CD8-positive, alpha-beta memory T cell (primary cell): ENCODE measurements at regions of chr9 and their contacts with region 1.

Region 1: GRCh38 chr9:71768388-71769174 is at the start of gene CEMIP2:
- DNase-seq: peak; percentile 84 to 91 (median 87)
- H3K4me3 ChIP-seq: peak within 1 kb of the TSS; percentile 98
- H3K4me3 Mint-ChIP-seq: peak within 1 kb of the TSS; percentile 91 to 100 (median 97)
- H3K27ac ChIP-seq: peak within 1 kb of the TSS; percentile 84
- H3K27ac Mint-ChIP-seq: peak within 1 kb of the TSS; percentile 94 to 99 (median 98)
- H3K4me1 ChIP-seq: peaks cover 37% of the 10 kb centered on the region
- H3K4me1 Mint-ChIP-seq: peaks cover 42 to 45% (median 45%) of the 10 kb centered on the region in 3 donors
- H3K27me3 ChIP-seq: no peaks in the 10 kb centered on the region
- H3K27me3 Mint-ChIP-seq: peaks cover 0 to 1% of the 10 kb centered on the region in 2 donors
- total RNA-seq, gene CEMIP2: 74.1 to 75.5 TPM

Region 2: DNA sequence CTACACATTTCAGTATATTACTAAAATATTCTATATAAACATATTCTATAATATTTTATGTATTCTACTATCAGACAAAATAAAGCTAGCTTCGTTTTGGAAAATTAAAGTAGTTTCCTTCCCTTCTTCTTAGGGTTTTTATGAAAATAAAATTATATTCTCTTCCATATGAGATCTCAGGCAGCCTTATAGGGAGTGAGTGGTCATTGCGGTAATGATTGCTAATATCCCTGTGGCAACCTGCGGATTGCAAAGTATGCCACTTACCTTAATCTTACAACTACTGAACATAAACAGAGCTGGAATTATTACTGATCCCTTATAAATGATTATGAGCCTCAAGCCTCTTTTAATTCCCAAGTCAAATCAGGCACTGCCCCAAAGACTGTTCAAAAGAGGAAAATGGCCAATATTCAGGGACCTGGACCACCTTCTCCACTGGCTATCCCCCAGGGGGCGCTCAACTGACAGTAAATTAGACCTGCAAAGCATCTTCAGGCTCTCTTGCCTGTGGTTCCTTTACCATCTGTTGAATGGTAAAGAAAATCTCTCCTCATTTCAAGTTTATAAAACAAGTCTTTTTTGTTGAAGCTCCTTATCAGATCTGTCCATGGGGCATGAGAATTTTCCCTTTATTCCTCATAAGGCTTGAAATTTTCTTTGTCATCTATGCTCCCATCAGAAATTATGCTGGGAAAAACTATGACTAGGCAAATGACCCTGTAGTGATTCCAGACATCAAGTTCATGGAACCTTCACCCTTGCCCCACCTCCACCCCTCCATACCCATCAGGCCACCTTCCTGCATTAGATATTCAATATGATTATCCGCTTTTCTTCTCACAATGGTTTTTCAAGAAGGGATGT is 164.2 kb before region 1 on chr9:
- CTCF ChIA-PET with region 1: interaction called, 21 read pairs
- POLR2A ChIA-PET with region 1: interaction called, 3 read pairs
- DNase-seq: peak; percentile 64 to 84 (median 69)
- H3K4me3 ChIP-seq: no peak overlapping the region
- H3K4me3 Mint-ChIP-seq: no peak overlapping the region
- H3K27ac ChIP-seq: no peak overlapping the region
- H3K27ac Mint-ChIP-seq: no peak overlapping the region
- H3K4me1 ChIP-seq: no peaks in the 10 kb centered on the region
- H3K4me1 Mint-ChIP-seq: no peaks in the 10 kb centered on the region
- H3K27me3 ChIP-seq: no peaks in the 10 kb centered on the region
- H3K27me3 Mint-ChIP-seq: no peaks in the 10 kb centered on the region

Region 3: GRCh38 chr9:71655151-71655550 is 113.4 kb before region 1 on chr9:
- CTCF ChIA-PET with region 1: no interaction called
- POLR2A ChIA-PET with region 1: no interaction called
- DNase-seq: no peak
- H3K4me3 ChIP-seq: no peak overlapping the region
- H3K4me3 Mint-ChIP-seq: no peak overlapping the region
- H3K27ac ChIP-seq: no peak overlapping the region
- H3K27ac Mint-ChIP-seq: no peak overlapping the region
- H3K4me1 ChIP-seq: no peaks in the 10 kb centered on the region
- H3K4me1 Mint-ChIP-seq: peaks cover 6 to 9% (median 8%) of the 10 kb centered on the region in 3 donors
- H3K27me3 ChIP-seq: no peaks in the 10 kb centered on the region
- H3K27me3 Mint-ChIP-seq: peaks cover 7 to 12% of the 10 kb centered on the region in 2 donors

Region 4: DNA sequence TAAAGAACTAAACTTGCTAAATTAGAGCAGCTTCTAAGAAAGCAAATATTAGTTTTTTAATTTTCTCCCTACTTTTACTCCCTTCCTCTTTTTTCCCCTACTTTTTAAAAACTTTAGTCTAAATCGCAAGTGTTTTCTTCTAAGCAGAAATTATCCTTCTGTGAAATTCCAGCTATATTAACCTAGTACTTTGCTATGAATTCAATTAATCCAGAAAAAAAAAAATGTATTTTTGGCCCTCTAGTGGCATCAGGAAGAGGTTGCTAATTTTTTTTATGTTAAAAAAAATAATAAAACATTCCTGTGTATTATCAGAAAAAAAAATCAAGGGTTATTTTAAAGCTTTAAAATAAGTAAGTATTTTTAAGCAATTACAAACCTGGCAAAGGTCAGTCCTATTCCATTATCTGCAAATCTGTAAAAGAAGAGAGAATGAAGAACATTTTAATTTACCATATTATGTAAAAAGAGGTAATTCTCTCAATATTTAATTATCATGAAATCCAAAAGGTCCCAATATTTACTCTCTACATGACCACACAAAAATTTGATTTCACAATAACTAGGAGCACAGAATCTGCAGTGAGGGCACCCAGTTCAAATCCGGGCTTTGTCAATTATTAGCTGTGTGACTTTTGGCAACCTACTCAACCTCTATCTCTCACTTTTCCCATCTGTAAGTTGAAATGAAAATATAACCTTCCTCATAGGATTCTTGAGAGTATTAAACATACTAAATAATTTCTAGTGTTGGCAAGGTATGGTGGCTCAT is 52.3 kb before region 1 on chr9:
- CTCF ChIA-PET with region 1: interaction called, 10 read pairs
- POLR2A ChIA-PET with region 1: interaction called, 3 read pairs
- DNase-seq: peak in 1 of 5 donors; percentile 12
- H3K4me3 ChIP-seq: no peak overlapping the region
- H3K4me3 Mint-ChIP-seq: no peak overlapping the region
- H3K27ac ChIP-seq: no peak overlapping the region
- H3K27ac Mint-ChIP-seq: peak overlapping the region in 2 of 8 donors; percentile 36 to 82
- H3K4me1 ChIP-seq: no peaks in the 10 kb centered on the region
- H3K4me1 Mint-ChIP-seq: peaks cover 0 to 4% (median 1%) of the 10 kb centered on the region in 3 donors
- H3K27me3 ChIP-seq: no peaks in the 10 kb centered on the region
- H3K27me3 Mint-ChIP-seq: no peaks in the 10 kb centered on the region

Region 5: DNA sequence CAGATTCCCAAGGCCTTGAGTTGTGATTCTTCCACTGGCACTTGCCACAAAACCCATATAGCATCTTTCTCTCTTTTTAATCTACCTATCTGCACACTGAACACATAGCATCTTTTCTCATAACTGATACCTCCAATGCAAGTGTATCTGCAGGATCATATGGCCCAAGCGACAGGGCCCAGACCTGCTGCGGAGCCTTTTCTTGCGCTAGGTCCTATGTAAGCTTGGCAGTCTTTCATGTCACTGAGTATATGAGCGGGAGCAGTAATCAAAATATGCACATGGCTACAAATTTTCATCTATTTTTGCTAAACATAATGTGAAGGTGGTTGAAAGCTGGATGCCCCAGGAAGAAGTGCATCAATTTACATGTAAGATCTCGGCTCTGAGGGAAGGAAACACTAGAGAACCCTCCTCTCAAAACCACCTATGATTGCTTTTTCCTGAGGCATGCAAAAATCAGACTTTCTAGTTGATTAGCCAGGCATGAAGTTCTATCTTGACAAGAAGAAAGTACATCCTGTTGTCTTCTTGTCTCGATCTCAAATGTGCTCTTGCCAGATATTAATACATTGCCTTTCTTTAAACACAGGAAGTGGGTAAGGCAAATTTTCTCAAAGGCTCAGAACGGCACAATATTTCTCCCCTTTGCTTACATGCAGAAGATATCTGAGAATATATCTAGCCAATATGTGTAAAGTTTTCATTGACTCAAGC is 26.7 kb after region 1 on chr9:
- CTCF ChIA-PET with region 1: interaction called, 20 read pairs
- POLR2A ChIA-PET with region 1: interaction called, 3 read pairs
- DNase-seq: peak in 2 of 5 donors; percentile 65 to 77
- H3K4me3 ChIP-seq: peak overlapping the region; percentile 21
- H3K4me3 Mint-ChIP-seq: peak overlapping the region; percentile 16 to 74 (median 61)
- H3K27ac ChIP-seq: peak overlapping the region; percentile 2
- H3K27ac Mint-ChIP-seq: peak overlapping the region; percentile 76 to 98 (median 93)
- H3K4me1 ChIP-seq: peaks cover 60% of the 10 kb centered on the region
- H3K4me1 Mint-ChIP-seq: peaks cover 48 to 64% (median 62%) of the 10 kb centered on the region in 3 donors
- H3K27me3 ChIP-seq: no peaks in the 10 kb centered on the region
- H3K27me3 Mint-ChIP-seq: no peaks in the 10 kb centered on the region

Region 6: GRCh38 chr9:71819115-71819739 is 50.6 kb after region 1 on chr9:
- CTCF ChIA-PET with region 1: interaction called, 35 read pairs
- POLR2A ChIA-PET with region 1: no interaction called
- DNase-seq: peak; percentile 25 to 62 (median 44)
- H3K4me3 ChIP-seq: no peak overlapping the region
- H3K4me3 Mint-ChIP-seq: no peak overlapping the region
- H3K27ac ChIP-seq: no peak overlapping the region
- H3K27ac Mint-ChIP-seq: peak overlapping the region in 2 of 8 donors; percentile 15 to 69
- H3K4me1 ChIP-seq: peaks cover 8% of the 10 kb centered on the region
- H3K4me1 Mint-ChIP-seq: peaks cover 10 to 24% (median 18%) of the 10 kb centered on the region in 3 donors
- H3K27me3 ChIP-seq: no peaks in the 10 kb centered on the region
- H3K27me3 Mint-ChIP-seq: peaks cover 0 to 2% of the 10 kb centered on the region in 2 donors